K562 (cell line): ENCODE measurements at regions of chr1 and their contacts with region 1.

Region 1: DNA sequence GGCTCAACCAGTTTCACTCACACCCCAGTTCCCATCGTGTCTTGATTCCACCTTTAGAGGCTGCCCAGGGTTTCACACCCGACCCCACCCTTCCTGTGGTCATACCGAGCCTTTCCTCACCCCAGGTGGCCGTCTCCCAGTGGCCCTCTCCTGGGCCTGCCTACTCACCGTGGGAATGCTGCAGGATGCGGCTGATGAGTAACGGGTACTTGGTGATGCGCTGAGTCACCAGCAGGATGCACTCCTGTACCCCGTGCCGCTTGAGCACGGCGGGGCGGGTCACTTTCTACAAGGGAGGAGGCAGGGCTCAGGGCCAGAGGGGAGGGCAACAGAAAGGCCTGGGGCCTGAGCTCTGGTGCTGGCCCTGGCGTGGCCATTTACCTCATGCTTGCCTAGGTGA is 16.4 kb downstream of the ARHGEF2 start:
- DNase-seq: peak in 1 of 4 experiments; percentile 48
- ATAC-seq: peak; percentile 14; the same call in 2 of the 3 replicates
- H3K4me3 ChIP-seq: no peak overlapping the region
- H3K27ac ChIP-seq: no peak overlapping the region; the same call in 2 of the 3 replicates
- H3K4me1 ChIP-seq: peaks cover 3 to 28% of the 10 kb centered on the region in 2 experiments; a peak in 4 of 5 replicates
- H3K27me3 ChIP-seq: no peaks in the 10 kb centered on the region
- CTCF ChIP-seq: peak in 1 of 3 experiments; percentile 17; a peak in 1 of 6 replicates
- EP300 ChIP-seq: no peak
- POLR2A ChIP-seq: no peak
- RAD21 ChIP-seq: peak in 1 of 2 experiments; percentile 21; a peak in 1 of 4 replicates

Region 2: GRCh38 chr1:155940531-155940992 is 21.4 kb before region 1 on chr1:
- CTCF ChIA-PET with region 1: no interaction called
- POLR2A ChIA-PET with region 1: interaction called, 23 read pairs
- in situ Hi-C with region 1: no loop called
- intact Hi-C with region 1: no loop called
- DNase-seq: no peak
- ATAC-seq: peak; percentile 22
- H3K4me3 ChIP-seq: no peak overlapping the region
- H3K27ac ChIP-seq: peak overlapping the region; percentile 70
- H3K4me1 ChIP-seq: peaks cover 19 to 29% of the 10 kb centered on the region in 2 experiments
- H3K27me3 ChIP-seq: no peaks in the 10 kb centered on the region
- CTCF ChIP-seq: no peak
- EP300 ChIP-seq: no peak
- POLR2A ChIP-seq: no peak
- RAD21 ChIP-seq: 0 out of 4 replicates have a peak, but pooled peaks of 1 of the 2 experiments have one; percentile 5

Region 3: DNA sequence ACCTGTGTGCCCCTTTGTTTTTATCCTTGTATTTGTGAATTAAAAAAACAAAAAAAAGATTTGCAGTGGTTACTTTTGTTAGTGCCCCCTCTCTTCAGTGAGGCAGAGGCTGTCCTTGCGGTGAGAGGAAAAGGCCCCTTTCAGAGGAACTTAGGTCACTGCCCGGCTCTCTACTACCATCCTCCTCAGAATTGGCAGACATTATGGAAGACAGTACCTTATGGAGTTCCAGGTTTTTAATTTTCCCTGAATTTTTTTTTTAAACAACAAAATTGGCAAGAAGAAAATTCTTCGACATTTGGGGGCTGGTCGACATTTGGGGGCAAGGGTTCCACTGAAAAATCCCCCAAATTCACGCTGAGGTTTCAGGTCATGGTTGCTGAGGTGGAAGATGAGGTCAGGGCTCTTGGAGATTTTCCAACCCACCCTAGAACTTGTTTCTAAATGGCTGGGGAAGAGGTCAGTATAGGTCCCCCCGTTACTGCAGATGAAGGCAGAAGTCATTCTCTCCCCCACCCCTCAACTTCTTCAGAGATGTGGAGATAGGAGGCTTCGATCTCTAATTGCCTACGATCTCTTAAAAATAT is 15.2 kb before region 1 on chr1:
- CTCF ChIA-PET with region 1: interaction called, 4 read pairs
- POLR2A ChIA-PET with region 1: interaction called, 23 read pairs
- in situ Hi-C with region 1: no loop called
- intact Hi-C with region 1: no loop called
- DNase-seq: no peak
- ATAC-seq: no peak
- H3K4me3 ChIP-seq: no peak overlapping the region
- H3K27ac ChIP-seq: no peak overlapping the region
- H3K4me1 ChIP-seq: peaks cover 0 to 10% of the 10 kb centered on the region in 2 experiments; a peak in 2 of 5 replicates
- H3K27me3 ChIP-seq: no peaks in the 10 kb centered on the region
- CTCF ChIP-seq: no peak
- EP300 ChIP-seq: no peak
- POLR2A ChIP-seq: no peak
- RAD21 ChIP-seq: no peak

Region 4: GRCh38 chr1:155978325-155978972 is 16.5 kb after region 1 on chr1 and contains the start of gene ARHGEF2:
- CTCF ChIA-PET with region 1: no interaction called
- POLR2A ChIA-PET with region 1: interaction called, 41 read pairs
- in situ Hi-C with region 1: no loop called
- intact Hi-C with region 1: no loop called
- DNase-seq: peak; percentile 88 to 91 (median 89)
- ATAC-seq: peak; percentile 65
- H3K4me3 ChIP-seq: peak within 1 kb of the TSS; percentile 82
- H3K27ac ChIP-seq: peak within 1 kb of the TSS; percentile 93
- H3K4me1 ChIP-seq: peaks cover 58 to 75% of the 10 kb centered on the region in 2 experiments
- H3K27me3 ChIP-seq: no peaks in the 10 kb centered on the region
- CTCF ChIP-seq: peak; percentile 30 to 42 (median 31); a peak in 4 of 6 replicates
- EP300 ChIP-seq: no peak
- POLR2A ChIP-seq: peak; percentile 78
- RAD21 ChIP-seq: peak in 1 of 2 experiments; percentile 22; a peak in 2 of 4 replicates
- polyA plus RNA-seq, gene ARHGEF2: 7.1 to 8.9 TPM